AG04450 (cell line): ENCODE measurements at regions of chr9 and their contacts with region 1.

Region 1: DNA sequence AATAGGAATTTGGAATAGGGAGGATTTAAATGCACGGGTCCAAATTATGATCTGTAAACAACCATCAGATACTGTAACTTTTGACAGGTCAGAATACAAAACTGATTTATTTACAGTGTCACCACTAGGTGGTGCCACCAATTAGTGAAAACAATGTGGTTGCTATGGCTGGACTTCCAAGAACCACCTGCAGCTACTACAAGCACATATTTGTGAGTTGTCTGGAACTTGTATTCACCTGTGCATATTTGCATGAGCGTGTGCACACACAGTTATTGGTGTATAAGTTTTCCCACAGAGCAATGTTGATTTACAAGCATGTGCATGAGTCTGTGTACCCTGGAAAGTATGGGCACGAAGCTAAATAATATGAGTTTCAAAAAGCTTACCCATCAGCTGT is 3.0 kb upstream of the HRCT1 start:
- DNase-seq: no peak
- H3K4me3 ChIP-seq: no peak overlapping the region
- H3K27ac ChIP-seq: no peak overlapping the region
- H3K27me3 ChIP-seq: peaks cover 10% of the 10 kb centered on the region
- CTCF ChIP-seq: peak; percentile 54

Region 2: GRCh38 chr9:35962126-35962906 is 59.3 kb after region 1 on chr9:
- CTCF ChIA-PET with region 1: interaction called, 13 read pairs
- POLR2A ChIA-PET with region 1: no interaction called
- DNase-seq: peak; percentile 49
- H3K4me3 ChIP-seq: peak overlapping the region; percentile 38
- H3K27ac ChIP-seq: peak overlapping the region; percentile 71
- H3K27me3 ChIP-seq: no peaks in the 10 kb centered on the region
- CTCF ChIP-seq: no peak